Heart left ventricle (tissue), 16 donors: ENCODE measurements at regions of chr16 and their contacts with region 1.

Region 1: GRCh38 chr16:67393035-67393787 is at the start of gene TPPP3:
- DNase-seq: peak; percentile 92 to 95 (median 94)
- ATAC-seq: peak; percentile 70 to 84 (median 80)
- H3K4me3 ChIP-seq: peak within 1 kb of the TSS; percentile 14 to 67 (median 54)
- H3K27ac ChIP-seq: peak within 1 kb of the TSS in 11 of 12 donors; percentile 12 to 82 (median 69)
- H3K4me1 ChIP-seq: peaks cover 5 to 75% (median 50%) of the 10 kb centered on the region in 12 donors
- H3K27me3 ChIP-seq: peaks cover 0 to 28% (median 5%) of the 10 kb centered on the region in 9 donors
- CTCF ChIP-seq: peak; percentile 50 to 88 (median 70)
- POLR2A ChIP-seq: no peak
- total RNA-seq, gene TPPP3: 7.0 to 17.0 (median 10.2) TPM

Region 2: DNA sequence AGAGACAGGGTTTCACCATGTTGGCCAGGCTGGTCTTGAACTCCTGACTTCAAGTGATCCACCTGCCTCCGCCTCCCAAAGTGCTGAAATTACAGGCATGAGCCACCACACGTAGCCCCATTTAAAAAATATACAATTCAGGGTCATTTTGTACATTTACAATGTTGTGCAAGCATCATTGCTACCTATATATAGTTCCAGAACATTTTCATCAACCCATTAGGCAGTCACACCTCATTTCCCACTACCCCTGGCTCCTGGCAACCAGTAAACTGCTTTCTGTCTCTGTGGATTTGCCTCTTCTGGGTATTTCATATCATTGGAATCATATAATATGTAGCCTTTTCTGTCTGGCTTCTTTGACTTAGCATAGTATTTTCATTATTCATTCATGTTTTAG is 59.9 kb before region 1 on chr16:
- intact Hi-C with region 1: no loop called
- DNase-seq: no peak
- ATAC-seq: no peak
- H3K4me3 ChIP-seq: no peak overlapping the region
- H3K27ac ChIP-seq: no peak overlapping the region
- H3K4me1 ChIP-seq: no peaks in the 10 kb centered on the region
- H3K27me3 ChIP-seq: no peaks in the 10 kb centered on the region
- CTCF ChIP-seq: no peak
- POLR2A ChIP-seq: no peak

Region 3: GRCh38 chr16:67349172-67349571 is 44.0 kb before region 1 on chr16:
- intact Hi-C with region 1: loop called in 1 of 10 experiments (anchors 10 kb)
- DNase-seq: no peak
- ATAC-seq: no peak
- H3K4me3 ChIP-seq: no peak overlapping the region
- H3K27ac ChIP-seq: no peak overlapping the region
- H3K4me1 ChIP-seq: peaks cover 0 to 12% (median 0%) of the 10 kb centered on the region in 12 donors
- H3K27me3 ChIP-seq: no peaks in the 10 kb centered on the region
- CTCF ChIP-seq: peak in 10 of 12 donors; percentile 19 to 53 (median 42)
- POLR2A ChIP-seq: no peak